Esophagus muscularis mucosa (tissue), 4 donors: ENCODE measurements at regions of chr16 and their contacts with region 1.

Region 1: DNA sequence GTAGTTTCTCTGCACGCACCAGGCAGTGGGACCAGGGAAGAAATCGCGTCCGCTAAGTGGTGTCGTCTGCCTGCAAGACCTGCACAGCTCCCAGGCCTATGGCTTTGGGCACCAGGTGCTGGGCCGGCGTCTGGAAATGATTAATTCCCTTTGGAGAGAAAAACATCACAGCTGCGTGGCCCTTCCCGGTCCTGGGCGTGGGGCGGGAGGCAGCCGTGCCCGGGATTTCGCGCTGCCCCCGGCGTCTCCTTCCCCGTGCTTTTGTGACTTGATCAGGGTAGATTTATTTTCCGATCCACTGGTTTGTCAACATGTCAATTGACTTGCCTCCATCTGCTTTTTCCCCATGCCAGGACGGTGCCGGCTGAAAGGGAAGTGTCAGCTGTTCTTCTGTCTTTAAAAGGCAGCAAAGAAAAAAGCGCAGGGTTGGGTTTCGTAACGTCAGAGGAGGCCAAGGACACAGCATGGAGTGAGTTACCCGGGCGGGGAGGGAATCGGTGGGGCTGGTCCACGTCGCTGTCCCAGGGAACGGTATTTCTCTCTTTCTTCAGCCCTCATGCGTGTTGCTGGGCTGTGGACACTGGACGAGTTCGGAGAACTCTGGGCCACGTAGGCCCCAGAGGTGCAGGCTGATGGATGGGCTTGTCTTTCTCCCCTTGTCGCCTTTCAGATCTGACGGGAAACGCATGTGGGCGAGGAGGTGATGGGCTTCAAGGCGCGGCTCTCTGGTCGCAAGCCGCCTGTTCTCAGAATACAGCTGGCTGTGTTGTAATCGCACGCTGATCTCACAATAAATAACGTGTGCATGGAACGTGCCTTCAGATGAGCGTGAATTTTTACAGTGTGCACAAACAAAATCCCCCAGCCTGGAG is 188.1 kb upstream of the ZNF469 start:
- DNase-seq: peak; percentile 90
- H3K4me3 ChIP-seq: no peak overlapping the region
- H3K27ac ChIP-seq: no peak overlapping the region
- H3K4me1 ChIP-seq: no peaks in the 10 kb centered on the region
- H3K27me3 ChIP-seq: no peaks in the 10 kb centered on the region
- CTCF ChIP-seq: no peak
- EP300 ChIP-seq: no peak
- POLR2A ChIP-seq: no peak

Region 2: DNA sequence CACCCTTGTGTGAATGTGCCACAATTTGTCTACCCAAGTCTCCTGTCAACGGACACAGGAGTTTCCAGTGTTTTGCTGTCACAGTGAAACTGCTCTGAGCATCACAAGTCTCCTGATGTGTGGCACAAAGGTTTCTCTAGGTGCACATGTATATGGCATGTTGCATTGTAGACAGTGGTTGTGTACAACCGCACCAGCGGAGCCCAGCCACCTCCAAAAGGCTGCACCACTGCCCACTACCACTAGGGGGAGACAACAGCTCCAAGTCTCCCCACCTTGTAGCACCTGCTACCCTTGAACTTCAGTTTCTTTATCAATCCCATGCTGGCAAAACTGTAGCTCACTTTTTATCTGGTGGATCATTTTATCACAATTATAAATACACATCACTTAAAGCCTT is 92.6 kb after region 1 on chr16:
- intact Hi-C with region 1: no loop called
- DNase-seq: no peak
- H3K4me3 ChIP-seq: no peak overlapping the region
- H3K27ac ChIP-seq: no peak overlapping the region
- H3K4me1 ChIP-seq: peaks cover 0 to 10% (median 8%) of the 10 kb centered on the region in 4 donors
- H3K27me3 ChIP-seq: peaks cover 0 to 11% (median 0%) of the 10 kb centered on the region in 4 donors
- CTCF ChIP-seq: peak in 1 of 3 experiments; percentile 76
- EP300 ChIP-seq: no peak
- POLR2A ChIP-seq: no peak

Region 3: GRCh38 chr16:88383401-88384221 is 189.0 kb after region 1 on chr16:
- intact Hi-C with region 1: loop called (anchors 5 kb)
- DNase-seq: no peak
- H3K4me3 ChIP-seq: peak overlapping the region; percentile 54 to 64 (median 56)
- H3K27ac ChIP-seq: peak overlapping the region in 1 of 4 donors; percentile 18
- H3K4me1 ChIP-seq: peaks cover 11 to 34% (median 29%) of the 10 kb centered on the region in 4 donors
- H3K27me3 ChIP-seq: peaks cover 0 to 55% (median 10%) of the 10 kb centered on the region in 4 donors
- CTCF ChIP-seq: peak; percentile 46 to 77 (median 55)
- EP300 ChIP-seq: no peak
- POLR2A ChIP-seq: no peak